Body of pancreas (tissue), 4 donors: ENCODE measurements at regions of chr19 and their contacts with region 1.

Region 1: DNA sequence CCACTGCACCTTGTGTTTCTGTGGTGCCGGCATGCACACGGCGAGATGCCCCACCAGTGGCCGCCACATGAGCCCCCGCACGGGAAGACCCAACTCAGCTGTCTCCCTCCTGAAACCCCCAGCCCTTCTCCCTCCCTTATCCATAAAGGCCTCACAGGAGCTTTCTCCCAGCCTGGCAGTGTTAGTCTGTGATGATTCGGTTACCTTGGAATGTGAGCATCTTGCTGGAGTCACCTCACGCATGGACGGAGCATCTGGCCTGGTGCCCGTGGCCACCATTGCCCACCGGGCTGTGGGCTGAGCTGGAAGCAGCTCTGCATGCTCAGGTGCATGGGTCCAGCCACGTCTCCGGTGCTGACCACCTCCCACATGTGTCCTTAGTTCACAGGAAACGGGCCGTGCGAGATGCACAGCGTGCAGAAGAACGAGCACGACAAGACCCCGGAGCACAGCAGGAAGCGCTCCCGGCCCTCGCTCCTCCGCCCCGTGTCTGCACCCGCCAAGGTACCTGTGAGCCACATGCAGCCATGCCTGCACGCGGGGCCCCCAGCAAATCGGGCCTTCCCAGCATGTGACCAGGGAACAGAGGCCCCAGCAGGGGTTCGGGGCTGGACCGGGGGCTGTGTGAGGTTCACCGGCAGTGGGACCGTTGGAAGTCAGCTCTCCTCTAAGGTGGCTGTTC is 22.0 kb downstream of the SIN3B start:
- DNase-seq: no peak
- ATAC-seq: no peak
- H3K4me3 ChIP-seq: no peak overlapping the region
- H3K27ac ChIP-seq: no peak overlapping the region
- H3K4me1 ChIP-seq: no peaks in the 10 kb centered on the region
- H3K27me3 ChIP-seq: no peaks in the 10 kb centered on the region
- CTCF ChIP-seq: no peak
- POLR2A ChIP-seq: no peak

Region 2: DNA sequence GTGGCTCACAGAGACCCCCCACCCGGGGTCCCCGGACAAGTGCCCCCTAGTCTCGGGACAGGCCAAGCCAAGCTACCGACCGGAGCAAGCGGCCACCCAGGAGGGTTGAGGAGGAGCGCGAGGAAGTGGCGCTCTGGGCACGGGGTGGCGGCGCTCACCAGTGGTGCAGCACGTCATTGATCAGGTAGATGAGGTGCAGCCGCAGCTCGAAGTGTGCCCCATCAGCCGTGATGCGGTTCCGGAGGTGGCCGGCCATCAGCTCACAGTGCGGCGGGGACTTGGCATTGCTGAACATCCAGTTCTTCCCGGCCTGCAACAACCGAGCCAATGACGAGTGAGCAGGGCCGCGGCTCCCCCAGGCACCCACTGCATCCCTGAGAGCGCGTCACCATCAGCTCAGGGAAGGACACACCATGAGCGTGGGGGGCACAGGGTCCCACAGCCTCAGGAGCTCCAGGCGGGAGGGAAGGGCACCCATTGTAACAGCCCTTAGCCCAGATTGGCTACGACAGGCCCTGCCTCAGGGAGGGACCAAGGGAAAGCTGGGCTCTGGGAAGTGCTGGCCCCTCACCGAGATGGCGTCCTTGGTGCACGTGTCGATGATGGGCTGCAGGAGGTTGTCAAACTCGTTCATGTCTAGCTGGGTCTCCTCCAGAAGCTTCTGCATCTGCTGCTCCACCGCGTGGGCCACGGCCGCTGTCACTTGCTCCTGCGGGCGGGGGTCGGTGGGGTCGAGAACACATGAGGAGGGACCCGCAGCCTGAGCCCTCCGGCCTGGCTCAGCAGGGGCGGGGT is 318.5 kb before region 1 on chr19:
- intact Hi-C with region 1: loop called (anchors 5 kb)
- DNase-seq: no peak
- ATAC-seq: no peak
- H3K4me3 ChIP-seq: no peak overlapping the region
- H3K27ac ChIP-seq: no peak overlapping the region
- H3K4me1 ChIP-seq: no peaks in the 10 kb centered on the region
- H3K27me3 ChIP-seq: no peaks in the 10 kb centered on the region
- CTCF ChIP-seq: no peak
- POLR2A ChIP-seq: no peak

Region 3: GRCh38 chr19:16791960-16792359 is 59.2 kb before region 1 on chr19:
- intact Hi-C with region 1: no loop called
- DNase-seq: no peak
- ATAC-seq: no peak
- H3K4me3 ChIP-seq: no peak overlapping the region
- H3K27ac ChIP-seq: no peak overlapping the region
- H3K4me1 ChIP-seq: no peaks in the 10 kb centered on the region
- H3K27me3 ChIP-seq: no peaks in the 10 kb centered on the region
- CTCF ChIP-seq: no peak
- POLR2A ChIP-seq: no peak

Region 4: DNA sequence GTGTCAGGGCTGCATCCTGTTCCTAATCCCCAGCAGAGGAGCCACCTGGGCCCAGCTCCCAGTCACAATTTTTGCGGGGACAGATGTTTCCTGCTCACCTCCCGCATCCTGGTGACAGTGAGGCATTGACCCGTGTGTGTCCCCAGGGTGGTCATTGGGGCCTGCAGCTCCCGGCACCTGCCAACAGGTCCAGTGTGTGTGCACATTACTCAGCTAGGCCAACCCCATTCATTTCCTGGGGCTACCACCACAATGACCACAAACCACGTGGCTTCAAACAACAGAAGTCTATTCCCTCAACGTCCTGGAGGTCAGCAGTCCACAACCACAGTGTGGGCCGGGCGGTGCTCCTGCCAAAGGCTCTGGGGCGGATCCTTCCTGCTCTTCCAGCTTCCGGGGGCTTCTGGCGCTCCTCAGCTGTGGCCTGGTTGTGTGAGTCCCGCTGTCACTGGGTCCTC is 25.8 kb after region 1 on chr19:
- intact Hi-C with region 1: no loop called
- DNase-seq: no peak
- ATAC-seq: peak; percentile 16
- H3K4me3 ChIP-seq: no peak overlapping the region
- H3K27ac ChIP-seq: no peak overlapping the region
- H3K4me1 ChIP-seq: no peaks in the 10 kb centered on the region
- H3K27me3 ChIP-seq: no peaks in the 10 kb centered on the region
- CTCF ChIP-seq: no peak
- POLR2A ChIP-seq: no peak